Posterior vena cava (tissue), 2 donors: ENCODE measurements at regions of chr21 and their contacts with region 1.

Region 1: GRCh38 chr21:33116676-33117075 is 46.7 kb downstream of the OLIG1 start:
- DNase-seq: no peak

Region 2: GRCh38 chr21:33133892-33134291 is 17.2 kb after region 1 on chr21:
- intact Hi-C with region 1: loop called in 1 of 2 experiments (anchors 1 kb)
- DNase-seq: no peak